Activated CD8-positive, alpha-beta T cell treated with anti-CD3 and anti-CD28 coated beads, Interleukin-2, amount 10 ng/mL, durations not matched to agents 7 days and 5 days (primary cell): ENCODE measurements at regions of chr3 and their contacts with region 1.

Region 1: DNA sequence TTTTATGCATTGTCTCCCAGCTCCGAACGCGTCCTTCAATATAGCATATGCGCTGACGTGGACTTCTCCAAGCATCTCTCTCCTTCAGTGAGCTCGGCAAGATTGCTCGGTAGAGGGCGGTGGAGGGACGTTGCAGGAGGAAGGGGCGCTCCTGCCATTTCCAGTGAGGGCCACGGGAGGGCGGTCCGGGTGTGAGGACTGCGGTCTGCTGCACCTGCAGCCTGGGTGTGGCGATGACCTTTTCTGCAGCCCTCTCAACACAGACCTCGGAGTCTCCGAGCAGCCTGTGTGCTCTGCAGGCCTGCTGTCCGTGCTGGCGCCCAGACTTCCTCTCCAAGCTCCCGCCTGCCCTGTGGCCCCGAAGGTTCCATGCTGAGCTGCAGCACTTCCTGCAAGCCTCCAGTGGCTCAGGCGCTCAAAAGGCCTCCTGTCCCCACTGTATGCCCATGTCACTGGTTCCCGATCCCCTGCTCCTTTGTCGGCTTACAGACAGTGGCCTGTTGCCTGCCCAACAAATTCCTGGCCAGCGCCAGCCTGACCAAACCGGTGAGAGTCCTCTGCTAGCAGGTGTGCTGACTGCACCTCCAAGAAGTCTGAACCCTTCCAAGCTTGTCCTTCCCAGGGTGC is 8.9 kb upstream of the RTP3 start:
- DNase-seq: peak; percentile 96
- ATAC-seq: peak; percentile 99
- H3K4me3 Mint-ChIP-seq: peak overlapping the region; percentile 47
- H3K27ac Mint-ChIP-seq: peak overlapping the region; percentile 17
- H3K4me1 Mint-ChIP-seq: peaks cover 30% of the 10 kb centered on the region
- H3K27me3 Mint-ChIP-seq: peaks cover 12% of the 10 kb centered on the region

Region 2: DNA sequence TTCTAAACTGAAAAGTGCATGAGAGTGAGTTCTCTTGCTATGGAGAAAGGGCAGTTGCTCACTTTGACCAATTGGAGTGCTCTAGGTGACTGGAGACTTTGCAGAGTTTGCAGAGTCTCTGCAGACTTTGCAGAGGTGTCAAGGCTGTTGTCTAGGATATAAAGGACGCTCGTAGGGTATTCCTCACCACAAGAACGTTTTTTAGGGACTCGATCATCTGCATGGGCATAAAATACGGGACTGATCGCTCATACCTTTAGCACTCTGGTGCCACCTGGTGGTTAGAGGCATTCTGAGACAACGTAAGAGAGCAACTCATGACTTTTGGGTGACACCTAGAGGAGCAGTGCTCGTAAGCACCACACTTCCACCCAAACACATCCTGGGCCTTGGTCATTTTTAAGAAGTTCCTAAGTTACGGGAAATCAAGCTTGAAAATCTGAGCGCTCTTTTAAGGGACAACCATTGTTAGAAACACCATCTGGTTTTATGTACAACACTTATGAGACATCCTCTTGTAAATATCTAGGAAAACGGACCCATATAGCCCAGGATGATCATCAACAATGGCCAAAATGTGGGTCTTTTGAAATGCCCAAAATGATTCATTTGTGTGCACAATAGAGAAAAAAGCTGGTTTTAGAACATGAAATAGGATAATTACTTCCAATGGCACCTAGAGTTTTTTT is 410.0 kb before region 1 on chr3:
- CTCF ChIA-PET with region 1: no interaction called
- POLR2A ChIA-PET with region 1: no interaction called
- DNase-seq: peak; percentile 95
- ATAC-seq: peak; percentile 99
- H3K4me3 Mint-ChIP-seq: peak overlapping the region; percentile 29
- H3K27ac Mint-ChIP-seq: peak overlapping the region; percentile 58
- H3K4me1 Mint-ChIP-seq: peaks cover 70% of the 10 kb centered on the region
- H3K27me3 Mint-ChIP-seq: no peaks in the 10 kb centered on the region

Region 3: DNA sequence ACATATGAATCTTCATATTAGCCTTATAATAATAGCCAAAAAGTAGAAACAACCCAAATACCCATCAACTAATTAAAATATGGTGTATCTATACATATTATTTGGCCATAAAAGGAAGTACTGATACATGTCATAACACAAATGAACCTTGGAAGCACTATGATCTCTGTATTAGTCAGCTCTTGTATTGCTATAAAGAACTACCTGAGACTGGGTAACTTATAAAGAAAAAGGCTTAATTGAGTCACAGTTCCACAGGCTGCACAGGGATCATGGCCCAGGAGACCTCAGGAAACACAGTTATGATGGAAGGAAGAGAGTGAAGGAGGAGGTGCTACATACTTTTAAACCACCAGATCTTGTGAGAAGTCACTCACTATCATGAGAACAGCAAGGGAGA is 150.9 kb before region 1 on chr3:
- CTCF ChIA-PET with region 1: no interaction called
- POLR2A ChIA-PET with region 1: no interaction called
- DNase-seq: no peak
- ATAC-seq: no peak
- H3K4me3 Mint-ChIP-seq: no peak overlapping the region
- H3K27ac Mint-ChIP-seq: no peak overlapping the region
- H3K4me1 Mint-ChIP-seq: peaks cover 28% of the 10 kb centered on the region
- H3K27me3 Mint-ChIP-seq: no peaks in the 10 kb centered on the region

Region 4: DNA sequence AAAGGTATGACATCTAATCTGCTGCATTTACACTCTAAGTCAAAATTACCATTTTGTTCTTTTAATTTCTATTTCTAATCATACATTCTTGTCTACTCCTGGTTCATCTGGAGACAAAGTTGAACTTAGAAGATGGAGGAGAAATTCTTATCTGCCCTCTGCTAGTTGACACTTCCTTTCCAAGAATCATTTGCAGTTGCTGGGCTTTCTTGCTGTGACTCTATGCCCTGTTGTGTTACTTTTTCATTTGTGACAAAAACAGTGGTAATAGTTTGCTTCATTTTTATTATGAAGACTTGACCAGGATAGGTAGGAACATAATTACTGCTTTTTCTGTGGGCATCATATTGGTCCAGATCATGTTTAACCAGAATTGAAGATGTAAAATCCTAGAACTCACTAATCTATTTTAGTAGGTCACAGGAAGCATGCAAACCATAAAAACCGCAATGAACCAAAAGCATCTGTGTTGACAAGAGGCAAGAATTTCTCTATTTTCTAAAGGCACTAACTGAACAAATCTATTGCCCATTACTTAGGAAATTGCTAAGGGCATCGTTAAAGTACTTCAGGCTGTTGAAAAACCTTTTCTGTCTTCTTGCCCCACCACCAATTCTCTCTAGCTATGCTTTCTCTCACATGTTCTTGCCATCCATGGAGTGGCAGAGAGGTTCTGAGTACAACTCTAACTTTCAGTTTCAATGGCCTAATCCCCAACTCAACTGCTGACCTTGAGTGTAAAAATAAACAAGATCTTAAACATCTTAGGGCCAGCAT is 139.2 kb before region 1 on chr3:
- CTCF ChIA-PET with region 1: no interaction called
- POLR2A ChIA-PET with region 1: no interaction called
- DNase-seq: peak; percentile 68
- ATAC-seq: peak; percentile 54
- H3K4me3 Mint-ChIP-seq: peak overlapping the region; percentile 59
- H3K27ac Mint-ChIP-seq: peak overlapping the region; percentile 91
- H3K4me1 Mint-ChIP-seq: peaks cover 80% of the 10 kb centered on the region
- H3K27me3 Mint-ChIP-seq: no peaks in the 10 kb centered on the region

Region 5: GRCh38 chr3:46378426-46378942 is 110.4 kb before region 1 on chr3:
- CTCF ChIA-PET with region 1: interaction called, 11 read pairs
- POLR2A ChIA-PET with region 1: no interaction called
- DNase-seq: peak; percentile 82
- ATAC-seq: peak; percentile 50
- H3K4me3 Mint-ChIP-seq: no peak overlapping the region
- H3K27ac Mint-ChIP-seq: no peak overlapping the region
- H3K4me1 Mint-ChIP-seq: peaks cover 76% of the 10 kb centered on the region
- H3K27me3 Mint-ChIP-seq: no peaks in the 10 kb centered on the region

Region 6: DNA sequence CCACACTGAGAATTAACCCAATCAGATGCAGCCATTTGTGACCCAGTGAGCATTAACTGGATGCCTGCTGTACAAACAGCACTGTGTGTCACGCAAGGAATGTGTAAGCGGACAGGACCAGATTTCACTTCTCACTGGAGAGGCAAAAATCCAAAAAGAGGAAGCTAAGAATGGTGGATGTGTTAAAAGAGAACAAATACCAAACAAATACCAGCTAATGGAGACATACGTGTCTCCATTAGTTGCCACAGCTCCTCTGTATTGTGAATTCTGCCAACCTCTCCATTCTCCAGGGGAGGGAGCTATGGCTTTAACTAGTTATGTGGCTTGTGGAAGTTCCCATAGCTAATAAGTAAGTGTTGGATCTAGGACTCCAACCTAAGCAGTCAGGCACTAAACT is 26.7 kb before region 1 on chr3:
- CTCF ChIA-PET with region 1: interaction called, 16 read pairs
- POLR2A ChIA-PET with region 1: no interaction called
- DNase-seq: no peak
- ATAC-seq: no peak
- H3K4me3 Mint-ChIP-seq: no peak overlapping the region
- H3K27ac Mint-ChIP-seq: no peak overlapping the region
- H3K4me1 Mint-ChIP-seq: peaks cover 13% of the 10 kb centered on the region
- H3K27me3 Mint-ChIP-seq: peaks cover 64% of the 10 kb centered on the region

Region 7: GRCh38 chr3:46527239-46527638 is 38.4 kb after region 1 on chr3:
- CTCF ChIA-PET with region 1: interaction called, 20 read pairs
- POLR2A ChIA-PET with region 1: no interaction called
- DNase-seq: no peak
- ATAC-seq: no peak
- H3K4me3 Mint-ChIP-seq: no peak overlapping the region
- H3K27ac Mint-ChIP-seq: no peak overlapping the region
- H3K4me1 Mint-ChIP-seq: no peaks in the 10 kb centered on the region
- H3K27me3 Mint-ChIP-seq: peaks cover 18% of the 10 kb centered on the region

Region 8: DNA sequence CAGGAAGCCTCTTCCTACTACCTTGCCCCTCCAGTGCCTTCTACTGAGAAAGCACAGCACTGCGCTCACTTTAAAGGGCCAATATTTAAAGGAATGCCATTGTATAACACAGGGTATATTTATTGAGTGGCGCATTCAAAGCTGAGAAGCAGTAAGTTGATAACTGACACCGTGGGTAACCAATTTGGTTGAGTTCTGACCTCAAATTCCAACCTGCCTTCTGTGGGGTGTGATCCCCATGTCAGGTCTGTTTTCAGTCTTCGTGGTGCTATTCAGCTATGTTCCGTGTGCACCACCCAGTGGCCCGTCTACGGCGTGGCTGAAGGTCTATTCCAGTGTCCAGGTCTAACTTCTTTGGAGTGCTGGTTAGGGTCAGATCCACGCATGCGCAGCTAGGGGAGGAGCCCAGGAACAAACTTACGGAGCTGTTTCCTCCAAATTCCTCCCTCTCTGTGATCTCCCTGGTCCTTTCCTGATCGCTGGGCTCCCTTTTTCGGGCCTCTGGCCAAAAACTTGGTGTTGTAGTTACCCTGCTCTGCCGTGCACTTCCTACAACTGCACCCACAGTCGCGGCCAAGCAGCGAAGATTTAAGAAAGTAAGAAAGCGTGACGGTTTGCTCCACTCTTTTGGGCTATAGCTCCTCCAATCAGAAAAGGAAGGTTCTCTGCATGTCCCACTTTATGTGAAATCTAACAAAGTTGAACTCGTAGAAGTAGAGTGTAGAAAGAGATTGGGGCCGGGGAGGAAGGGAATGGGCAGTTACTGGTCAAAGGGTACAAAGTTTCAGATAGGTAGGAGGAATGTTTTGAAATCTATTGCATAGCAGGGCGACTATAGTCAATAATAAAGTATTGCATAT is 69.6 kb after region 1 on chr3:
- CTCF ChIA-PET with region 1: interaction called, 223 read pairs
- POLR2A ChIA-PET with region 1: no interaction called
- DNase-seq: peak; percentile 84
- ATAC-seq: peak; percentile 100
- H3K4me3 Mint-ChIP-seq: peak overlapping the region; percentile 77
- H3K27ac Mint-ChIP-seq: peak overlapping the region; percentile 63
- H3K4me1 Mint-ChIP-seq: peaks cover 26% of the 10 kb centered on the region
- H3K27me3 Mint-ChIP-seq: peaks cover 44% of the 10 kb centered on the region

Region 9: GRCh38 chr3:46585799-46586693 is 97.2 kb after region 1 on chr3:
- CTCF ChIA-PET with region 1: interaction called, 31 read pairs
- POLR2A ChIA-PET with region 1: no interaction called
- DNase-seq: no peak
- ATAC-seq: no peak
- H3K4me3 Mint-ChIP-seq: no peak overlapping the region
- H3K27ac Mint-ChIP-seq: no peak overlapping the region
- H3K4me1 Mint-ChIP-seq: peaks cover 6% of the 10 kb centered on the region
- H3K27me3 Mint-ChIP-seq: peaks cover 7% of the 10 kb centered on the region

Region 10: GRCh38 chr3:46642971-46643370 is 154.1 kb after region 1 on chr3:
- CTCF ChIA-PET with region 1: interaction called, 22 read pairs
- POLR2A ChIA-PET with region 1: no interaction called
- DNase-seq: no peak
- ATAC-seq: no peak
- H3K4me3 Mint-ChIP-seq: no peak overlapping the region
- H3K27ac Mint-ChIP-seq: no peak overlapping the region
- H3K4me1 Mint-ChIP-seq: no peaks in the 10 kb centered on the region
- H3K27me3 Mint-ChIP-seq: peaks cover 39% of the 10 kb centered on the region